ENCODE measurements at regions of chr5 and their contacts with region 1.

Region 1: GRCh38 chr5:169374761-169375160 is 73.8 kb upstream of the SLIT3 start:
- DNase-seq: no peak
- H3K4me3 ChIP-seq: no peak overlapping the region
- H3K27ac ChIP-seq: no peak overlapping the region
- H3K4me1 ChIP-seq: 0 out of 2 replicates have a peak, but pooled peaks cover 5% of the 10 kb centered on the region
- H3K27me3 ChIP-seq: no peaks in the 10 kb centered on the region
- CTCF ChIP-seq: no peak

Region 2: GRCh38 chr5:168920019-168920810 is 454.5 kb before region 1 on chr5:
- CTCF ChIA-PET with region 1: no interaction called
- POLR2A ChIA-PET with region 1: no interaction called
- intact Hi-C with region 1: no loop called
- DNase-seq: no peak
- H3K4me3 ChIP-seq: no peak overlapping the region
- H3K27ac ChIP-seq: no peak overlapping the region
- H3K4me1 ChIP-seq: no peaks in the 10 kb centered on the region
- H3K27me3 ChIP-seq: peaks cover 93% of the 10 kb centered on the region
- CTCF ChIP-seq: no peak

Region 3: GRCh38 chr5:169226905-169227304 is 147.9 kb before region 1 on chr5:
- CTCF ChIA-PET with region 1: no interaction called
- POLR2A ChIA-PET with region 1: no interaction called
- intact Hi-C with region 1: no loop called
- DNase-seq: no peak
- H3K4me3 ChIP-seq: no peak overlapping the region
- H3K27ac ChIP-seq: no peak overlapping the region
- H3K4me1 ChIP-seq: no peaks in the 10 kb centered on the region
- H3K27me3 ChIP-seq: peaks cover 88% of the 10 kb centered on the region
- CTCF ChIP-seq: no peak

Region 4: DNA sequence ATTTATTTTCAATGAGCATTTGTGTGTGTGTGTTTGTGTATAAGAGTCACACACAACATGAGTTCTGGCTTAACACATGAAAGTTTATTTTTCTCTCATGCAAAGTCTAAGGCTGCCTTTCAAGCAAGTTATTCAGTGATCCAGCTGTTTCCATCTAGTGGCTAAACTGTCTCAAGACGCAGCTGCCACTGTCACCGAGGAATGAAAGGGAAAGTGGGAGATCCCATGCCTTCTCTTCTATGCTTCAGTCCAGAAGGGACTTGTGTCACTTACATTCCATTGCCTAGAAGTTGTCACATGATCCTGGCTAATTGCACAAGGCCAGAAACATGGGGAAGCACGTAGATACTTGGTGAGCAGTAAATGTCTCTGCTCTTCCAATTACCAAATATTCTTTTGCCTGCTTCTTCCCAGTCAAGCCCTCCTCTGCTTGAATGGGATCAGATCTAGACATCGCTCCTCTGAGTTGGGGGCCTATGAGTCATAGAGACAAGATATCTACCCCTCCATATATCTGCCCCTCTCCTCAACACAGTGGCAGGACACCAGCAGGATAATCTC is 43.4 kb before region 1 on chr5:
- CTCF ChIA-PET with region 1: no interaction called
- POLR2A ChIA-PET with region 1: no interaction called
- intact Hi-C with region 1: no loop called
- DNase-seq: no peak
- H3K4me3 ChIP-seq: no peak overlapping the region
- H3K27ac ChIP-seq: no peak overlapping the region
- H3K4me1 ChIP-seq: no peaks in the 10 kb centered on the region
- H3K27me3 ChIP-seq: no peaks in the 10 kb centered on the region
- CTCF ChIP-seq: no peak

Region 5: DNA sequence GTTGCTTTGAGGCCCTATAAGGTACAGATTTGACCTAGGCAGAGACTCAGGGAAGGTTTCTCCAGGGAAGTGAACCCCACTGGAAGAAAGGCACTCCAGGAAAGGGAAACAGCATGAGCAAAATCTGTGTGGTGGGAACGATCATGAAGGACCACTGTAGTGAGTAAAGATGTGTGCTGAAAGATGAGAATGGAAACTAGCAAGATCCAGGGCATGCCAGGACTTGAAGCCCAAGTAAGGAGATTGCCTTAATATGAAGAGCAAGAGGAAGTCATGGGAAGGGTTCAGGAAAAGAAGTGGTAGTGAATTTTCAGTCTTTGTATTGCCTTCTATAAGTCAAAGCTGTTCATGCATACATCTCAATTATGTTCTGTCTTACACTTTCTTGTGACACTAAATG is 18.6 kb before region 1 on chr5:
- CTCF ChIA-PET with region 1: no interaction called
- POLR2A ChIA-PET with region 1: no interaction called
- intact Hi-C with region 1: loop called (anchors 2 kb)
- DNase-seq: no peak
- H3K4me3 ChIP-seq: no peak overlapping the region
- H3K27ac ChIP-seq: peak overlapping the region; percentile 98
- H3K4me1 ChIP-seq: peaks cover 64% of the 10 kb centered on the region
- H3K27me3 ChIP-seq: no peaks in the 10 kb centered on the region
- CTCF ChIP-seq: no peak

Measured in PC-9 (cell line).